Gastrocnemius medialis (tissue), 4 donors: ENCODE measurements at regions of chr12 and their contacts with region 1.

Region 1: GRCh38 chr12:110549716-110550115 is 33.4 kb downstream of the PPTC7 start:
- DNase-seq: peak in 1 of 2 donors; percentile 22
- ATAC-seq: peak; percentile 19 to 43
- H3K4me3 ChIP-seq: no peak overlapping the region
- H3K27ac ChIP-seq: peak overlapping the region; percentile 89 to 95 (median 94)
- H3K4me1 ChIP-seq: peaks cover 82 to 95% of the 10 kb centered on the region in 2 donors
- H3K27me3 ChIP-seq: no peaks in the 10 kb centered on the region
- CTCF ChIP-seq: no peak
- POLR2A ChIP-seq: peak; percentile 10 to 48

Region 2: GRCh38 chr12:110590806-110591326 is 41.1 kb after region 1 on chr12:
- in situ Hi-C with region 1: loop called in 2 of 4 experiments (anchors 5 kb)
- intact Hi-C with region 1: no loop called
- DNase-seq: no peak
- ATAC-seq: peak; percentile 42 to 51
- H3K4me3 ChIP-seq: no peak overlapping the region
- H3K27ac ChIP-seq: peak overlapping the region; percentile 68 to 86 (median 79)
- H3K4me1 ChIP-seq: peaks cover 21 to 30% of the 10 kb centered on the region in 2 donors
- H3K27me3 ChIP-seq: no peaks in the 10 kb centered on the region
- CTCF ChIP-seq: no peak
- POLR2A ChIP-seq: no peak